HEK293T (cell line): ENCODE measurements at regions of chr12 and their contacts with region 1.

Region 1: DNA sequence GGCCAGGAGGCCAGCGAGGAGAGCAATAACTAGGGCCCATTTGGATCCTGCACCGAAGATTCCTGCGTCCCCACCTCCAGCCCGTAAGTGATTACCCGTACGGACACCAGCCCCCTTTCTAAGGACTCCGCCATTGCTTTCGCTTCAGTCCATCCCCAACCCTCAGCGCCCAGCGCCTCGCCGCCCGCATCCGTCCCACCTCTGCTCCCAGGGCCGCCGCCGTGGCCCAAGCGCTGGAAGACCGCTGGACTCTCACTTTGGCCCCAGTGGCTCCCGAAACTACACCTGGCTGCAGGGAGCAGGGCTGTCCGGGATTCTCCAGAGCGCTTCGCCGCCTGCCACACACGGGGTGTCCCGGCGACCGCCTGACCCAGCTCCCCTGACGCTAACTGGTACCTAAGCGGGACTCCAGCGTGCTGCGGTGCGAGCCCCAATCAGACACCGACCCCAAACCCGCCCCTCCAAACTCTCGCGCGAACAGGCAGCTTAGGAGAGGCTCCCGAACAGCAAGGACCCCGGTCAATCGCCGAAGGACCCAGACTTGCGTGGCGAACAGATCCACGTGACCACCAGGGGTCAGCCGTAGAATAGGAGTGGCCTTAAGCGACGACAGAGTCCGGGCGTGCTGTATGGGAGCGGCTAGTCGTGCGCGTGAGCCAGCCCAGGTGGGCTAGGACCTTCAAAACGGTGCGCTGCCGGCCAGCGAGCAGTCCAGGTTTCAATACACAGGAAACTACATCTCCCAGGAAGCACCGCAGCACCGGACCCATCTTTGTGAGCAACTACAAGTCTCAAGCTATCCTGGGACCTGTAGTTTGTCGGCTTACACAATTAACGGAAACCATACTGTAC is at the start of gene CNPY2:
- DNase-seq: peak; percentile 92

Region 2: DNA sequence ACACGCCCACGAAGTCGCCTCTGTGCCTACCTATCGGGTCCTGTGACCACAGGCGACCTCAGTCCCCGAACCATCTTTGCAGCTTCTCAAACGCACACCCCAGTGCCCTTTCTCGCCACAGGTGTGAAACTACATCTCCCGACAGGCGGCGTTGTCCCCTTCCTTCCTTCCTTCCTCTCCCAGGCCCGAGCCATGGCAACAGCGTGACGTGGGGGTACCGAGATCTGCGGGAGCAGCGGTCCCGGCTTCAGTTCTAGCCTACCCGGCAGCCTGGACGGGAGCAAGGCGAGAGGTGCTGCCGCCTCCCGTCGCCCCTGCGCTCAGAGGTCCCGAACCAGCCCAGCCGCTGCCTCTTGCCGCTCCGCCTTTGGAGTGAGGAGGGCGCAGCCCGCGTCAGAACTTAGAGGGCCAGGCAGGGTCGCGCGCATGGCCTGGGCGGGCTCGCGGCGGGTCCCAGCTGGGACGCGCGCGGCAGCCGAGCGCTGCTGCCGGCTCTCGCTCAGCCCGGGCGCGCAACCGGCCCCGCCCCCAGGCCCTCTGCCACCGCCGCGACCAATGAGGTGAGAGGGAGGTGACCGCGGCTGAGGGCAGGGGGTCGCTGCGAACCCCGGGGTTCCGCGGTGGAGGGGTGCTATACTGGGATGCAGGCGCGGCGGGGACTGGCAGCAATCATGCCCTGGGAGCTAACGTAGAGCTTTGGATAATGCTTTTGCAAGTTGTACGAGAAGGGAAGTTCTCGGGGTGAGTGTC is 49.0 kb before region 1 on chr12 and contains the start of gene COQ10A:
- CTCF ChIA-PET with region 1: interaction called, 3 read pairs
- POLR2A ChIA-PET with region 1: interaction called, 14 read pairs
- DNase-seq: peak; percentile 92

Region 3: GRCh38 chr12:56298828-56299227 is 17.0 kb before region 1 on chr12:
- CTCF ChIA-PET with region 1: no interaction called
- POLR2A ChIA-PET with region 1: no interaction called
- DNase-seq: no peak

Region 4: GRCh38 chr12:56333679-56334489 is 18.0 kb after region 1 on chr12 and contains the start of gene PAN2:
- CTCF ChIA-PET with region 1: no interaction called
- POLR2A ChIA-PET with region 1: interaction called, 38 read pairs
- DNase-seq: peak; percentile 95

Region 5: GRCh38 chr12:56366948-56367347 is 51.1 kb after region 1 on chr12:
- CTCF ChIA-PET with region 1: no interaction called
- POLR2A ChIA-PET with region 1: no interaction called
- DNase-seq: no peak

Region 6: DNA sequence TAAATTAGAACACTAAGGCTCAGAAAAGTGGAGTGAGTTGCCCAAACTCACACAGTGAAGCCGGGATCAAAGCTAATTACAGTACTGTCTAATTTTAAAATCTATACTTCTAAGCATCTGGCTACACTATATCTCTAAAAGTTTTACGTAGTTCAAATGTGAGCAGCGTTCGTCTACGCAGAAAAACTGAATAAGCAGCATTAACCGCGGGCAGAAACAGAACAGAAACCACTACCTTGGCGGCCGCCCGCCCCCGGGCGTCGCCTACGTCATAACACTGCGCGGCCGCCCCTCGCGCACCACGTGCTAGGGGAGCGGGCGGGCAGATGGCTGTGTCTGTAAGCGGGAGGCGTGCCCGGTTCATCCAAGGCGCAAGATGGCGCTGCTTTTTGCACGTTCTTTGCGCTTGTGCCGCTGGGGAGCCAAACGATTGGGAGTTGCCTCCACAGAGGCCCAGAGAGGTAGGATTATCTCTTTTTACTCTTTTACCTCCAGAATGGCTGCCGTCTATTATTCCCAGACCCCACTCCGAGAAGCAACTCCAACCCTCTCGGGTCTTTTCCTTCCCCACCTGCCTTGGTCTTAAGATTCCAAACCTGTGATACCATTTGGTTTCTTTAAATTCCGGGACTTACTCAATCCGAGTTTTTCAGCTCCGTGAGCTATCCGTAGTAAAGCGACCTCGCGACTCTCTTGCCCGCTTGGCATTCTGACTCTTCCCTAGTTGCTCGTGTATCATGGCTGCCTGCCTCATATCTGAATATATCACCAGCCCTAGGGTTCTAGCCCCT is 152.6 kb after region 1 on chr12 and contains the start of gene SPRYD4:
- CTCF ChIA-PET with region 1: interaction called, 20 read pairs
- POLR2A ChIA-PET with region 1: interaction called, 14 read pairs
- DNase-seq: peak; percentile 96